Ascending aorta (tissue), 2 donors: ENCODE measurements at regions of chr22 and their contacts with region 1.

Region 1: GRCh38 chr22:31881201-31881600 is 63.1 kb upstream of the YWHAH start:
- DNase-seq: no peak
- H3K4me3 ChIP-seq: no peak overlapping the region
- H3K27ac ChIP-seq: no peak overlapping the region
- H3K4me1 ChIP-seq: no peaks in the 10 kb centered on the region
- H3K27me3 ChIP-seq: no peaks in the 10 kb centered on the region
- CTCF ChIP-seq: no peak

Region 2: DNA sequence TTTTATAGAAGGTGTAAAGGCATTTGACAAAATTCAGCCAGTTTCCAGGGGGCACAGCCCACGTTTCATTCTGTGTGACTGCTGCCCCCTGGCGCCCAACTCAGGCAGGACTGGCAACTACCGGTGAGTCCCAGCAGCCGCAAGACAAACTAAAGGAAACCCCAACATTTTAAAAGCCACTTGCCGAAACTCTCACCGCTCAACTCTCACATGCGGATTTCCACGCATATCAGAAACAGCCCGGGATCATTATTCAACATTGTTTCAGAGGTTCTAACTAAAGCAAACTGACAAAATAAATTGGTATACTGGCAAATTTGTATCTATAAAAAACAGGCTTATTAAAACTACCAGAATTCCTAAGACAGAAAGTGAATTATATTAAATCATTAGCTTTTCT is 960.8 kb before region 1 on chr22:
- intact Hi-C with region 1: no loop called
- DNase-seq: peak in 1 of 2 donors; percentile 82
- H3K4me3 ChIP-seq: peak overlapping the region in 1 of 2 donors; percentile 64
- H3K27ac ChIP-seq: no peak overlapping the region
- H3K4me1 ChIP-seq: peaks cover 0 to 3% of the 10 kb centered on the region in 2 donors
- H3K27me3 ChIP-seq: no peaks in the 10 kb centered on the region
- CTCF ChIP-seq: peak; percentile 83 to 96 (median 88)

Region 3: DNA sequence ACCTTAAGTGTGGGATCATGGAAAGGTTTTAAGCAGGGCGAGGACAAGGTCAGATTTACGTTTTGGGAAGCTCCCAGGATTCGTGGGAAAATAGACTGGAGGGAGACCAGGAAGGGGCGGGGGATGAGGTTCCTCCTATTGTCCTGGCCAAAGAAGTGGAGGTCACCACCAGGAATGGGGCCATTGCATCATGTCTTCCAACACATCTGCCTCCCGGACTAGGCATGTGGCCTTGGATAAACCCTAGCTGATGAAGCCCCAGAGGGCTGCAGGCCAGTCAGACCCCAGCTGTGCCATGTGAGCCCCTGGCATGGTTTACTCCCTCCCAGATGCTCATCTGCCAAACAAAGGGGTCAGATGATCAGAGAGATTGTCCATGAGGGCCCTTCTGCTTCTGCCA is 51.7 kb after region 1 on chr22:
- intact Hi-C with region 1: loop called (anchors 5 kb)
- DNase-seq: no peak
- H3K4me3 ChIP-seq: no peak overlapping the region
- H3K27ac ChIP-seq: no peak overlapping the region
- H3K4me1 ChIP-seq: no peaks in the 10 kb centered on the region
- H3K27me3 ChIP-seq: no peaks in the 10 kb centered on the region
- CTCF ChIP-seq: no peak